Gastrocnemius medialis (tissue), 4 donors: ENCODE measurements at regions of chr12 and their contacts with region 1.

Region 1: GRCh38 chr12:45415393-45415817 is 199.5 kb downstream of the ANO6 start:
- DNase-seq: peak; percentile 84 to 94
- ATAC-seq: peak; percentile 99 to 100
- H3K4me3 ChIP-seq: no peak overlapping the region
- H3K27ac ChIP-seq: peak overlapping the region; percentile 74 to 90 (median 82)
- H3K4me1 ChIP-seq: peaks cover 0 to 7% of the 10 kb centered on the region in 2 donors
- H3K27me3 ChIP-seq: no peaks in the 10 kb centered on the region
- CTCF ChIP-seq: no peak
- POLR2A ChIP-seq: no peak

Region 2: GRCh38 chr12:45234139-45234846 is 181.1 kb before region 1 on chr12:
- in situ Hi-C with region 1: no loop called
- intact Hi-C with region 1: loop called (anchors 5 kb)
- DNase-seq: peak in 1 of 2 donors; percentile 42
- ATAC-seq: peak; percentile 65 to 76
- H3K4me3 ChIP-seq: peak overlapping the region; percentile 5 to 21 (median 18)
- H3K27ac ChIP-seq: peak overlapping the region; percentile 90 to 97 (median 93)
- H3K4me1 ChIP-seq: peaks cover 57 to 62% of the 10 kb centered on the region in 2 donors
- H3K27me3 ChIP-seq: no peaks in the 10 kb centered on the region
- CTCF ChIP-seq: no peak
- POLR2A ChIP-seq: no peak

Region 3: GRCh38 chr12:45402288-45402687 is 13.1 kb before region 1 on chr12:
- in situ Hi-C with region 1: no loop called
- intact Hi-C with region 1: loop called (anchors 2 kb)
- DNase-seq: no peak
- ATAC-seq: no peak
- H3K4me3 ChIP-seq: no peak overlapping the region
- H3K27ac ChIP-seq: peak overlapping the region in 2 of 4 donors; percentile 14 to 21
- H3K4me1 ChIP-seq: peaks cover 7 to 10% of the 10 kb centered on the region in 2 donors
- H3K27me3 ChIP-seq: no peaks in the 10 kb centered on the region
- CTCF ChIP-seq: no peak
- POLR2A ChIP-seq: no peak